Activated CD4-positive, alpha-beta memory T cell treated with anti-CD3 and anti-CD28 coated beads for 36 hours (primary cell): ENCODE measurements at regions of chr12 and their contacts with region 1.

Region 1: GRCh38 chr12:107093417-107094182 is at the start of gene CRY1:
- DNase-seq: peak; percentile 95
- H3K4me3 Mint-ChIP-seq: no peak within 1 kb of the TSS
- H3K27ac Mint-ChIP-seq: no peak within 1 kb of the TSS
- H3K4me1 Mint-ChIP-seq: peaks cover 10% of the 10 kb centered on the region
- H3K27me3 Mint-ChIP-seq: peaks cover 8% of the 10 kb centered on the region
- total RNA-seq, gene CRY1: 23.5 to 24.1 TPM

Region 2: GRCh38 chr12:106357549-106358395 is 735.8 kb before region 1 on chr12 and contains the start of gene POLR3B:
- CTCF ChIA-PET with region 1: no interaction called
- POLR2A ChIA-PET with region 1: no interaction called
- intact Hi-C with region 1: loop called (anchors 1 kb)
- DNase-seq: peak; percentile 97
- H3K4me3 Mint-ChIP-seq: peak within 1 kb of the TSS; percentile 93
- H3K27ac Mint-ChIP-seq: peak within 1 kb of the TSS; percentile 92
- H3K4me1 Mint-ChIP-seq: peaks cover 15% of the 10 kb centered on the region
- H3K27me3 Mint-ChIP-seq: no peaks in the 10 kb centered on the region
- total RNA-seq, gene POLR3B: 6.2 to 7.3 TPM

Region 3: GRCh38 chr12:106692896-106693820 is 400.4 kb before region 1 on chr12:
- CTCF ChIA-PET with region 1: no interaction called
- POLR2A ChIA-PET with region 1: no interaction called
- intact Hi-C with region 1: no loop called
- DNase-seq: no peak
- H3K4me3 Mint-ChIP-seq: no peak overlapping the region
- H3K27ac Mint-ChIP-seq: no peak overlapping the region
- H3K4me1 Mint-ChIP-seq: no peaks in the 10 kb centered on the region
- H3K27me3 Mint-ChIP-seq: no peaks in the 10 kb centered on the region

Region 4: GRCh38 chr12:106986625-106987430 is 106.8 kb before region 1 on chr12 and contains the start of gene MTERF2:
- CTCF ChIA-PET with region 1: interaction called, 7 read pairs
- POLR2A ChIA-PET with region 1: no interaction called
- intact Hi-C with region 1: loop called (anchors 1 kb)
- DNase-seq: peak; percentile 90
- H3K4me3 Mint-ChIP-seq: peak within 1 kb of the TSS; percentile 88
- H3K27ac Mint-ChIP-seq: peak within 1 kb of the TSS; percentile 70
- H3K4me1 Mint-ChIP-seq: peaks cover 39% of the 10 kb centered on the region
- H3K27me3 Mint-ChIP-seq: no peaks in the 10 kb centered on the region
- total RNA-seq, gene MTERF2: 5.6 to 5.7 TPM

Region 5: DNA sequence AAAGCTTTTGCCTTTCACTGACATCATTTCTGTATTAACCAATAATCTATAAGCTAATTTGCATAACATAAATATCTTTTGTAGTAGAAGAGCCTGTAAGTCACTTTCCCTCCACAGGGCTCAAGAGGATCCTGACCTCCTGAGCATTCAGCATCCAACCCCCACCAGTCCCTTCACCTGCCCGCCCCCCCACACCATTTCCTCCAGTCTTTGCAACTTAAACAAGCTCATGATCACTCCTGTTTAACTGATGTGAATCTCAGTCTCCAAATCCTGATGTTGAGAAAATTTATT is 11.8 kb after region 1 on chr12:
- CTCF ChIA-PET with region 1: interaction called, 58 read pairs
- POLR2A ChIA-PET with region 1: interaction called, 3 read pairs
- intact Hi-C with region 1: loop called (anchors 1 kb)
- DNase-seq: no peak
- H3K4me3 Mint-ChIP-seq: no peak overlapping the region
- H3K27ac Mint-ChIP-seq: no peak overlapping the region
- H3K4me1 Mint-ChIP-seq: peaks cover 8% of the 10 kb centered on the region
- H3K27me3 Mint-ChIP-seq: peaks cover 1% of the 10 kb centered on the region

Region 6: GRCh38 chr12:107372229-107372658 is 278.6 kb after region 1 on chr12:
- CTCF ChIA-PET with region 1: no interaction called
- POLR2A ChIA-PET with region 1: no interaction called
- intact Hi-C with region 1: loop called (anchors 2 kb)
- DNase-seq: peak; percentile 54
- H3K4me3 Mint-ChIP-seq: no peak overlapping the region
- H3K27ac Mint-ChIP-seq: peak overlapping the region; percentile 89
- H3K4me1 Mint-ChIP-seq: peaks cover 70% of the 10 kb centered on the region
- H3K27me3 Mint-ChIP-seq: no peaks in the 10 kb centered on the region

Region 7: GRCh38 chr12:107760809-107761501 is 667.4 kb after region 1 on chr12 and contains the start of gene PRDM4:
- CTCF ChIA-PET with region 1: no interaction called
- POLR2A ChIA-PET with region 1: no interaction called
- intact Hi-C with region 1: loop called (anchors 5 kb)
- DNase-seq: peak; percentile 94
- H3K4me3 Mint-ChIP-seq: peak within 1 kb of the TSS; percentile 92
- H3K27ac Mint-ChIP-seq: peak within 1 kb of the TSS; percentile 88
- H3K4me1 Mint-ChIP-seq: peaks cover 27% of the 10 kb centered on the region
- H3K27me3 Mint-ChIP-seq: no peaks in the 10 kb centered on the region
- total RNA-seq, gene PRDM4: 33.4 to 39.0 TPM